Colonic mucosa (tissue), 4 donors: ENCODE measurements at regions of chr14 and their contacts with region 1.

Region 1: DNA sequence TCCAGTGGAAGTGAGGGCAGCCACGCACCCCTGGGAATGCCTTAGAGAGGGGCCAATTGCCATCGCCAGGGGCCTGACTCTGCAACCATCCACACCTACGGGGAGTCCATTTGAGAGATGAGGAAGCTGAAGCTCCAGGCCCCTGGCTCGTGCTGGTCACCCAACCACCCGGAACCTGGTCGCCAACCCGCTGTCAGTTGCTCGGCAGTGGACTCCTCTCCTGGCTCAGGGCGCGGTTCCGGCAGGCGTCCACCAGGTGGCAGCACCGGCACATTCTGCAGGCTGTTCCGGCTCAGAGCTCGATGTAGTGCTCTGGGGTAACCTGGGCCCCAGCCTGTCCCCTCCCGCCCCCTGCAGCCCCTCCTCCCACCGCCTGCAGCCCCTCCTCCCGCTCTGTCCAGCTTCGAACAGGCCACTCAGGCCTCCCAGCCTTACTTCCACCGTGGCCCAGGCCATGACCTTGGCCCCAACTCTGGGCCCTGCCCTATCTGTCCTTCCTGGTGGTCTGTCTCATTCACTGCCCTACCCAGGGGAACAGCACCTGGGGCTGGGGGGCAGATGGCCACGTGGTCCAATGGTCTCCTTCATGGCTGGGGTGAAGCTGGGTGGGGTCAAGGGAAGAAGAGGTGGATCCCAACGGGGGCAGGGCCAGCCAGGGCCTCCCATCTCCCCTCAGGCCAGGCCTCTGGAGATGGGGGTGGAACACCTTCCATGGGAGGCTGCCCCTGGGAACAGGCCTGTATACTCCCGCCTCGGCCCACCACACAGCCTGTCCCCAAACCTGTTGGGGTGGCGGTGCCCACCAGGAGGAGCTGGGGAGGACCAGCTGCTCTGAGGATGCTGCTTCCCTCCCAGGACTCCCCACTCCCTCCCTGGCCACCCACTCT is 15.7 kb downstream of the SIVA1 start:
- DNase-seq: peak; percentile 95
- H3K4me3 ChIP-seq: no peak overlapping the region
- H3K27ac ChIP-seq: no peak overlapping the region
- H3K4me1 ChIP-seq: peaks cover 3% of the 10 kb centered on the region
- H3K27me3 ChIP-seq: no peaks in the 10 kb centered on the region
- CTCF ChIP-seq: peak; percentile 95

Region 2: GRCh38 chr14:104826189-104826860 is 57.6 kb after region 1 on chr14:
- intact Hi-C with region 1: loop called (anchors 2 kb)
- DNase-seq: peak; percentile 96
- H3K4me3 ChIP-seq: peak overlapping the region; percentile 63
- H3K27ac ChIP-seq: peak overlapping the region; percentile 53
- H3K4me1 ChIP-seq: peaks cover 13% of the 10 kb centered on the region
- H3K27me3 ChIP-seq: no peaks in the 10 kb centered on the region
- CTCF ChIP-seq: peak; percentile 88

Region 3: DNA sequence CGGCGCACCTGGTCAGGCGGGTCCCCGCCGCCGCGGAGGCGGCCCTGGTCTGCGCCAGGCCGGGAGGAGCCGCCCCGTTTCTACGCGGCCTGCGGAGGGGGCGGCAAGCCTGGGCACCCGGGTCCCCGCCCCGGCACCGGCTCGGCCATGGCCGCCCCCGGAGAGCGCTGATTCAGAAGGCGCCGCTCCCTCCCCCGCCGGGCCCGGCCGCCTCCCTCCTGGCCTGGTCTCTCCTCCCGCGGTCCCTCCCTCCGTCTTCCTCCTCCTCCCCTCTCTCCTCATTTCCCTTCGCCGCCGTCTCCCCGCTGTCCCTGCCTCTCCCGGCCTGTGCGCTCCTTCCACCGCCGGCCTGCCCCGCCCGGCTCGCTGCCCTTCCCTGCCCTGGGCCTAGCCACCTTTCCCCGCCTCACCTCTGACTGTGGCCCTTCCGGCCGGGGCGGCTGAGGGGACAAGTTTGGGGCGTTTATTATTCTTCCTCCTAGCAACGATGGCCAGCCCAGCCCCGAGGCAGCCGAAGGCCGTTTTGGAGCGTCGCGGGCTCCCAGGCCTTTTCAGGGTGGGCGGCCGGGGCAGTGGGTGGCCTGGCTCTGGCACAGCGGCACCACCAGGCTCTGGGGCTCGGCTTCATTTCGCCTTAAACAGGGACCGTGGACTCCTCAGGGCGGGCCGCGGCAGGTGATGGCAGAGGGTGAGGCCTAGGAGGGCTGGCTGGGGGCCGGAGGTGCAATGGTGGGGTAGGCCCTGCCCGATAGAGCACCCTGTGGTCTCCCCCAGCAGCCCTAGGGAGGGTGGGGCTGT is 97.2 kb after region 1 on chr14:
- intact Hi-C with region 1: loop called (anchors 5 kb)
- DNase-seq: peak; percentile 79
- H3K4me3 ChIP-seq: peak overlapping the region; percentile 68
- H3K27ac ChIP-seq: peak overlapping the region; percentile 74
- H3K4me1 ChIP-seq: peaks cover 9% of the 10 kb centered on the region
- H3K27me3 ChIP-seq: no peaks in the 10 kb centered on the region
- CTCF ChIP-seq: no peak

Region 4: GRCh38 chr14:105045710-105046326 is 277.1 kb after region 1 on chr14:
- intact Hi-C with region 1: loop called (anchors 10 kb)
- DNase-seq: peak; percentile 93
- H3K4me3 ChIP-seq: no peak overlapping the region
- H3K27ac ChIP-seq: no peak overlapping the region
- H3K4me1 ChIP-seq: no peaks in the 10 kb centered on the region
- H3K27me3 ChIP-seq: no peaks in the 10 kb centered on the region
- CTCF ChIP-seq: peak; percentile 100